HCT116 (cell line): ENCODE measurements at regions of chr3 and their contacts with region 1.

Region 1: GRCh38 chr3:87350364-87351199 is 74.2 kb upstream of the POU1F1 start:
- DNase-seq: peak; percentile 38
- ATAC-seq: peak; percentile 99
- H3K4me3 ChIP-seq: no peak overlapping the region
- H3K27ac ChIP-seq: no peak overlapping the region
- H3K4me1 ChIP-seq: no peaks in the 10 kb centered on the region
- H3K27me3 ChIP-seq: no peaks in the 10 kb centered on the region
- CTCF ChIP-seq: peak; percentile 31 to 80 (median 78); a peak in 5 of 6 replicates
- POLR2A ChIP-seq: no peak
- RAD21 ChIP-seq: peak; percentile 62

Region 2: DNA sequence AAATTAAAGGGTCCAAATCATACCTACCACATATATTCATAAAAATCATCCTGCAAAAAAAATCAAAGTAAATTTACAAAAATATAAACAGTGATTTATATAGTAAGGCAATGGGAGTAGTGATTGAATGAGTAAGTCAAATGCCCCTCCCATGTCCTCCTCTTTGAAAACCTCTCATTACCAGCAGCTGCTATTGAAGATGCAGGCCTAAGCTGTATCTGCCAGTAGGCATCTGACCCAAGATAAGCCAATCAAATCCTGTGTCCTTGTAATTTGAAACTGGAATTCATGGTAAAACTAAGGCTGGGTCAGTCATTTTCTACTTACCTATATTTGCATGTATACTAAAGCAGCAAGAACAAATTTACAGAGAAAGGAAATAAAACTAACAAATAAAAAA is 13.8 kb before region 1 on chr3:
- CTCF ChIA-PET with region 1: interaction called, 18 read pairs
- POLR2A ChIA-PET with region 1: no interaction called
- RAD21 ChIA-PET with region 1: no interaction called
- intact Hi-C with region 1: no loop called
- DNase-seq: no peak
- ATAC-seq: no peak
- H3K4me3 ChIP-seq: no peak overlapping the region
- H3K27ac ChIP-seq: no peak overlapping the region
- H3K4me1 ChIP-seq: peaks cover 27 to 32% of the 10 kb centered on the region in 2 experiments
- H3K27me3 ChIP-seq: no peaks in the 10 kb centered on the region
- CTCF ChIP-seq: no peak
- POLR2A ChIP-seq: no peak
- RAD21 ChIP-seq: no peak

Region 3: GRCh38 chr3:87426918-87427317 is 76.3 kb after region 1 on chr3:
- CTCF ChIA-PET with region 1: no interaction called
- POLR2A ChIA-PET with region 1: no interaction called
- RAD21 ChIA-PET with region 1: no interaction called
- intact Hi-C with region 1: no loop called
- DNase-seq: no peak
- ATAC-seq: no peak
- H3K4me3 ChIP-seq: no peak overlapping the region
- H3K27ac ChIP-seq: no peak overlapping the region
- H3K4me1 ChIP-seq: no peaks in the 10 kb centered on the region
- H3K27me3 ChIP-seq: no peaks in the 10 kb centered on the region
- CTCF ChIP-seq: no peak
- POLR2A ChIP-seq: no peak
- RAD21 ChIP-seq: no peak